Activated CD4-positive, alpha-beta memory T cell treated with anti-CD3 and anti-CD28 coated beads for 36 hours (primary cell): ENCODE measurements at regions of chr4 and their contacts with region 1.

Region 1: GRCh38 chr4:153083447-153083947 is 120.7 kb upstream of the TRIM2 start:
- DNase-seq: peak; percentile 59
- H3K4me3 Mint-ChIP-seq: no peak overlapping the region
- H3K27ac Mint-ChIP-seq: no peak overlapping the region
- H3K4me1 Mint-ChIP-seq: peaks cover 40% of the 10 kb centered on the region
- H3K27me3 Mint-ChIP-seq: no peaks in the 10 kb centered on the region

Region 2: GRCh38 chr4:152850377-152850776 is 233.1 kb before region 1 on chr4:
- CTCF ChIA-PET with region 1: interaction called, 33 read pairs
- POLR2A ChIA-PET with region 1: no interaction called
- intact Hi-C with region 1: loop called (anchors 1 kb)
- DNase-seq: peak; percentile 64
- H3K4me3 Mint-ChIP-seq: no peak overlapping the region
- H3K27ac Mint-ChIP-seq: no peak overlapping the region
- H3K4me1 Mint-ChIP-seq: peaks cover 15% of the 10 kb centered on the region
- H3K27me3 Mint-ChIP-seq: no peaks in the 10 kb centered on the region

Region 3: DNA sequence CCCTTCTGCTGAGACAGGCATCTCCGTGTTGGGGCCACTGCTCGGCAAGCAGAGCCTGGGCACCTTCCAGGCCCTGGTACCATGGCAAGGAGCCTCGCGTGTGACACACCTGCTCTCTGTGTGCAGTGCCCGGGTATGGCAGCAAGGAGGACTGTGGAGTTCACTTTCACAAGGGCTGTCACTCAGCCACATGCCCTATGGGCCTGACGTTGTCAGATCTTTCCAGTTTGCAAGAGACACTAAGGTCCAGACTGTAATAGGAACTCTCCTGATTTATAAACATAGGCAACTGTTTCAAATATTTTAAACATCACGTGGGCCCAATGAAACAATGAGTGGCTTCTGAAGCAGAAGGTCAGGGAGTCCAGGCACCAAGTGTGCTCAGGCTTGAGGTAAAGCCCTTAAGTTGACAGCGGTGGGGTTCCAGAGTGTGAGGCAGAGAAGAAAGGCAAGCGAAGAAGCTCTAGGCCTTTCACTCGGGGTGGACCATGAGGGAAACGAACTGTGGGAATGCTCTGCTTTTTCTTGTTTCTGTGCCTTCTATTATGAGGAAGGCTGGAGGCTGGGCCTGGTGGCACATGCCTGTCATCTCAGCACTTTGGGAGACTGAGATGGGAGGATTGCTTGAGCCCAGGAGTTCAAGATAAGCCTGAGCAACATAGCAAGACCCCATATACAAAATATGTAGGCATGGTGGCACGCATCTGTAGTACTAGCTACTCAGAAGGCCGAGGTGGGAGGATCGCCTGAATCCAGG is 12.1 kb after region 1 on chr4:
- CTCF ChIA-PET with region 1: interaction called, 69 read pairs
- POLR2A ChIA-PET with region 1: no interaction called
- intact Hi-C with region 1: no loop called
- DNase-seq: no peak
- H3K4me3 Mint-ChIP-seq: no peak overlapping the region
- H3K27ac Mint-ChIP-seq: no peak overlapping the region
- H3K4me1 Mint-ChIP-seq: peaks cover 4% of the 10 kb centered on the region
- H3K27me3 Mint-ChIP-seq: no peaks in the 10 kb centered on the region

Region 4: DNA sequence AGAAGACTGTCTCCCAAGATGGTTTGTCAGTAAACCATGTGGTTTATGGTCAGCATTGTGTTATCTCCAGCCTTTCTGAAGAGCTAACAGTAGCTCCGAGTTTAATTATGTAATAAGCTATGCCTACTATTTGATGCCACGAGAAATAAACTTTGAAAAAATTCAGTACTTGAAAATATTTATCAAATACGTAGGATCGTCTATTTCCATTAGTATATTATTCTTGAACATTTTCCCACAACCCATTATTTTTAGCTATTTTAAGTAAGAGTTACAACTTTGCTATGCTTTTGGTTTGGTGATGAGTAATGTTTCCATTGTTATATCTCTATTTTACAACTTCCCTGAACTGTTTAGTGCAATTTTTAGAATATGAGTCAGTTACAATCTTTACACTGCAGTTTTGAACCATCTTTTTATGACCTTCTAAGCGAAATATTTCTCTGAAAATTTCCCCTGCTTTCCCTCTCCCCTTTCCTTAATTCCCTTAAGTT is 76.3 kb after region 1 on chr4:
- CTCF ChIA-PET with region 1: interaction called, 10 read pairs
- POLR2A ChIA-PET with region 1: no interaction called
- intact Hi-C with region 1: no loop called
- DNase-seq: no peak
- H3K4me3 Mint-ChIP-seq: peak overlapping the region; percentile 30
- H3K27ac Mint-ChIP-seq: peak overlapping the region; percentile 68
- H3K4me1 Mint-ChIP-seq: peaks cover 45% of the 10 kb centered on the region
- H3K27me3 Mint-ChIP-seq: peaks cover 5% of the 10 kb centered on the region

Region 5: GRCh38 chr4:153643406-153644383 is 560.2 kb after region 1 on chr4:
- CTCF ChIA-PET with region 1: interaction called, 18 read pairs
- POLR2A ChIA-PET with region 1: no interaction called
- intact Hi-C with region 1: no loop called
- DNase-seq: no peak
- H3K4me3 Mint-ChIP-seq: no peak overlapping the region
- H3K27ac Mint-ChIP-seq: no peak overlapping the region
- H3K4me1 Mint-ChIP-seq: peaks cover 17% of the 10 kb centered on the region
- H3K27me3 Mint-ChIP-seq: no peaks in the 10 kb centered on the region

Region 6: DNA sequence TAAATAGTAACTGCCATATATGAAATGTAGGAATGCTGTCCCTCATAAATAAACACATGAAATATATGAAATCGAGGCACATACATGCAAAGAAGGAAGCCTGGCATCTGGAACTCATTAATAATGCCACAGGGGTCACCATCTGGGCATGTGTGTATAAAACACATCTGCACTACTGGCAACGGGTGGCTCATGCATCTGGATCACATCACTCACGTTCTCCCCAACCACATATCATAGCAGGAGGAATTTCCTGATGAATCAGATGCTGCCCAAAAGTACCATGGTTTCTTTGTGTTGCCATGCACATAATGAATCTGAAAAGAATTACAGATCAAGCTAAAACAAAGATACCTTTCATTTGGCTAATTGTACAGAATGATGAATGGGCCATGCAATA is 647.7 kb after region 1 on chr4:
- CTCF ChIA-PET with region 1: no interaction called
- POLR2A ChIA-PET with region 1: no interaction called
- intact Hi-C with region 1: no loop called
- DNase-seq: no peak
- H3K4me3 Mint-ChIP-seq: no peak overlapping the region
- H3K27ac Mint-ChIP-seq: no peak overlapping the region
- H3K4me1 Mint-ChIP-seq: peaks cover 4% of the 10 kb centered on the region
- H3K27me3 Mint-ChIP-seq: no peaks in the 10 kb centered on the region